ENCODE measurements at regions of chr17 and their contacts with region 1.

Region 1: GRCh38 chr17:82022981-82023374 is at the start of gene LRRC45:
- DNase-seq: peak; percentile 96
- ATAC-seq: peak; percentile 93
- H3K4me3 ChIP-seq: peak within 1 kb of the TSS; percentile 95
- H3K27ac ChIP-seq: peak within 1 kb of the TSS; percentile 69
- H3K4me1 ChIP-seq: peaks cover 14% of the 10 kb centered on the region
- H3K27me3 ChIP-seq: no peaks in the 10 kb centered on the region
- CTCF ChIP-seq: no peak
- EP300 ChIP-seq: no peak
- POLR2A ChIP-seq: no peak
- RAD21 ChIP-seq: no peak
- polyA plus RNA-seq, gene LRRC45: 0.03 to 0.05 TPM

Region 2: GRCh38 chr17:81860756-81861518 is 162.0 kb before region 1 on chr17:
- CTCF ChIA-PET with region 1: no interaction called
- POLR2A ChIA-PET with region 1: interaction called, 3 read pairs
- RAD21 ChIA-PET with region 1: no interaction called
- SMC1A ChIA-PET with region 1: interaction called, 3 read pairs
- in situ Hi-C with region 1: no loop called
- intact Hi-C with region 1: loop called (anchors 5 kb)
- DNase-seq: peak; percentile 100
- ATAC-seq: peak; percentile 89
- H3K4me3 ChIP-seq: peak overlapping the region; percentile 94
- H3K27ac ChIP-seq: peak overlapping the region; percentile 98
- H3K4me1 ChIP-seq: peaks cover 23% of the 10 kb centered on the region
- H3K27me3 ChIP-seq: no peaks in the 10 kb centered on the region
- CTCF ChIP-seq: no peak
- EP300 ChIP-seq: 0 out of 4 replicates have a peak, but pooled peaks of 1 of the 2 experiments have one; percentile 42
- POLR2A ChIP-seq: peak; percentile 96
- RAD21 ChIP-seq: no peak

Region 3: DNA sequence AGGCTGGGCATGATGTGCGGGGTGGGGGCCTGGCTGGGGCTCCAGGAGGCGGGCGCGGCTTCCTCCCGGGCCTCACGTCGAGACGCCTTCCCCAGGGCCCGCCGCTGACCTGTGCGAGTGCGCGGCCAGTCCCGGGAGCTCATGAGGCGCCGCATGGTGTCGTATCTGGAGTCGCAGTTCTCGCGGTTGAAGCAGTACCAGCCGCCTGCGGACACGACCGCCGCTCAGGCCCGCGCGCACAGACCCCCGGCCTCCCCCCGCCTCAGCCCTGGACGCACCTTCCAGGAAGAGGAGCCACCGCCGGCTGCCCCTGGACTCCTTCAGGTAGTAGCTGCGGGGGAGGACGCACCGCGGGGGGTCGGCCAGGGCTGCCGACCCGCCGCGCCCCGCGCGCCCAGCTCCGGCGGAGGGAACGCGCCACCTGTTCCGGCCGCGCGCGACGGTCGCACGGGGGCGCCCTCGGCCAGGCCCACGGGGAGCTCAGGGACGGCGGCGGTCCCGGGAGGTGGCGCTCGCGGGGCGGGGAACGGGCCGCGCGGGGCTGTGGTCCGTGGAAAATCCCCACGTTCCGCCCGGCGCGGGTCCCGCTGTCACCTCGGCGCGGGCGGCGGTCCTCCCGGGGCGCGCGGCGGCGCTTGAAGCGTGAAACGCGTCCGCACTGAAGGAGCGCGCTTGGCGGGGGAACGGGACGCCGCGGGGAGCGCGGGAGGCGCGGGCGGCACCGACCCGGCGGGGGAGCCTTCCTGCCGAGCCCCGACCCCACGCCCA is 63.4 kb before region 1 on chr17:
- CTCF ChIA-PET with region 1: interaction called, 89 read pairs
- POLR2A ChIA-PET with region 1: interaction called, 8 read pairs
- RAD21 ChIA-PET with region 1: interaction called, 68 read pairs
- SMC1A ChIA-PET with region 1: interaction called, 8 read pairs
- in situ Hi-C with region 1: no loop called
- intact Hi-C with region 1: loop called (anchors 1 kb)
- DNase-seq: no peak
- ATAC-seq: peak; percentile 96
- H3K4me3 ChIP-seq: no peak overlapping the region
- H3K27ac ChIP-seq: no peak overlapping the region
- H3K4me1 ChIP-seq: no peaks in the 10 kb centered on the region
- H3K27me3 ChIP-seq: peaks cover 8 to 20% of the 10 kb centered on the region in 2 experiments
- CTCF ChIP-seq: peak; percentile 73 to 99 (median 74); a peak in 4 of 6 replicates
- EP300 ChIP-seq: no peak
- POLR2A ChIP-seq: no peak
- RAD21 ChIP-seq: peak; percentile 95

Region 4: GRCh38 chr17:82037113-82037888 is 14.3 kb after region 1 on chr17 and contains the start of gene DCXR:
- CTCF ChIA-PET with region 1: interaction called, 30 read pairs
- POLR2A ChIA-PET with region 1: interaction called, 13 read pairs
- RAD21 ChIA-PET with region 1: interaction called, 13 read pairs
- SMC1A ChIA-PET with region 1: interaction called, 3 read pairs
- in situ Hi-C with region 1: no loop called
- intact Hi-C with region 1: no loop called
- DNase-seq: peak; percentile 72
- ATAC-seq: peak; percentile 98
- H3K4me3 ChIP-seq: peak within 1 kb of the TSS; percentile 81
- H3K27ac ChIP-seq: peak within 1 kb of the TSS; percentile 89
- H3K4me1 ChIP-seq: peaks cover 10% of the 10 kb centered on the region
- H3K27me3 ChIP-seq: no peaks in the 10 kb centered on the region
- CTCF ChIP-seq: peak; percentile 83 to 94 (median 89)
- EP300 ChIP-seq: no peak
- POLR2A ChIP-seq: peak; percentile 99
- RAD21 ChIP-seq: no peak
- polyA plus RNA-seq, gene DCXR: 12.3 to 44.8 TPM

Measured in GM12878 (cell line).